Naive thymus-derived CD4-positive, alpha-beta T cell (primary cell): ENCODE measurements at regions of chr2 and their contacts with region 1.

Region 1: GRCh38 chr2:173922760-173923159 is 42.4 kb downstream of the SP3 start:
- DNase-seq: no peak
- ATAC-seq: no peak
- H3K4me3 ChIP-seq: no peak overlapping the region
- H3K4me3 Mint-ChIP-seq: peak overlapping the region in 3 of 10 donors; percentile 25 to 43 (median 35)
- H3K27ac ChIP-seq: no peak overlapping the region
- H3K27ac Mint-ChIP-seq: peak overlapping the region in 6 of 9 donors; percentile 29 to 76 (median 62)
- H3K4me1 ChIP-seq: peaks cover 17 to 24% of the 10 kb centered on the region in 2 donors
- H3K4me1 Mint-ChIP-seq: peaks cover 49 to 92% (median 85%) of the 10 kb centered on the region in 7 donors
- H3K27me3 ChIP-seq: no peaks in the 10 kb centered on the region
- H3K27me3 Mint-ChIP-seq: no peaks in the 10 kb centered on the region

Region 2: DNA sequence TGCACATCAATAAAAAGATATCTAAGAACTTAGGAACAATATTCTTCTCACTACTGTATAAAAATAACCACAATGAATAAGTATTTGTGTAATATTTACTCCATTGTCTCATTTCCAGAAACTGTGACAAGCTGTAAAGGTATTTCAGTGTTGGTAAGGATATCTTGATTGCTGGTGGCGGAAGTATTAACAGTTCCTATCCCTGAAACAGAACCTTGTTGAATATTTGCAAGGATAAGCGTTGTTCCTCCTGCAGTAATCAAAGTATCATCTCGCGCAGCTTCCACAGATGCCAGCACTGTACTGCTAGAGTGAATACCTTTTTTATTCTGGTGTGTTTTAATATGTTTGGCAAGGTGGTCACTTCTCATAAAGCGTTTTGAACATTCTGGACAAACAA is 12.9 kb before region 1 on chr2:
- CTCF ChIA-PET with region 1: no interaction called
- POLR2A ChIA-PET with region 1: no interaction called
- intact Hi-C with region 1: loop called in 1 of 2 experiments (anchors 2 kb)
- DNase-seq: no peak
- ATAC-seq: no peak
- H3K4me3 ChIP-seq: no peak overlapping the region
- H3K4me3 Mint-ChIP-seq: no peak overlapping the region
- H3K27ac ChIP-seq: no peak overlapping the region
- H3K27ac Mint-ChIP-seq: no peak overlapping the region
- H3K4me1 ChIP-seq: no peaks in the 10 kb centered on the region
- H3K4me1 Mint-ChIP-seq: peaks cover 5 to 17% (median 15%) of the 10 kb centered on the region in 7 donors
- H3K27me3 ChIP-seq: no peaks in the 10 kb centered on the region
- H3K27me3 Mint-ChIP-seq: no peaks in the 10 kb centered on the region

Region 3: GRCh38 chr2:173934895-173935294 is 12.1 kb after region 1 on chr2:
- CTCF ChIA-PET with region 1: no interaction called
- POLR2A ChIA-PET with region 1: no interaction called
- intact Hi-C with region 1: loop called in 1 of 2 experiments (anchors 2 kb)
- DNase-seq: no peak
- ATAC-seq: no peak
- H3K4me3 ChIP-seq: no peak overlapping the region
- H3K4me3 Mint-ChIP-seq: peak overlapping the region in 2 of 10 donors; percentile 16 to 35
- H3K27ac ChIP-seq: no peak overlapping the region
- H3K27ac Mint-ChIP-seq: peak overlapping the region in 3 of 9 donors; percentile 34 to 54 (median 41)
- H3K4me1 ChIP-seq: peaks cover 17 to 30% of the 10 kb centered on the region in 2 donors
- H3K4me1 Mint-ChIP-seq: peaks cover 20 to 43% (median 27%) of the 10 kb centered on the region in 7 donors
- H3K27me3 ChIP-seq: no peaks in the 10 kb centered on the region
- H3K27me3 Mint-ChIP-seq: no peaks in the 10 kb centered on the region